ENCODE measurements at regions of chr10 and their contacts with region 1.

Region 1: DNA sequence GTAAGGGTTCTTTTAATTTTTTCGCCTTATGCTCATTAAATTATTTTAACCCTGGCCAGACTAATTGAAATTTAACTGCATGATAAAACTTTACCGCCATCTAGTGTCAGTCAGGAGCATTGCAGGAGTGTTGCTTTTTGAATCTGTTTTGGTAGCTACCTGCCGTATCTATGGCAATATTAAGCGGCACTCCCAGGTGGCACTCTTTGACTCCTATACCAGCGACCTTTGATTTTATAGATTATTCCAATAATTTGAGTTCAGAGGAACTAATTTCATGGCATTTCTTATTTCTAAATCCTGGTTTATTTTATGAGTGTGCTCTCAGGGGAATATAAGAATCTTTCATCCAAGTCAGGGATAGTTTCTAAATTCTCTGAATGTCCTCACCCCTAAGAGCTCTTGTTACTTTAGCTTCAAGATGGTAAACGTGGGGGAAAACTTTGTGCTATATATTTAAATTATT is 198.9 kb downstream of the REEP3 start:
- DNase-seq: peak in 1 of 2 donors; percentile 39
- ATAC-seq: peak in 6 of 8 donors; percentile 22 to 53 (median 35)
- H3K4me3 ChIP-seq: no peak overlapping the region
- H3K27ac ChIP-seq: peak overlapping the region in 5 of 10 donors; percentile 33 to 66 (median 41)
- H3K4me1 ChIP-seq: peaks cover 0 to 39% (median 18%) of the 10 kb centered on the region in 9 donors
- H3K27me3 ChIP-seq: no peaks in the 10 kb centered on the region
- CTCF ChIP-seq: peak; percentile 95 to 99 (median 98)

Region 2: GRCh38 chr10:63166742-63167258 is 553.3 kb before region 1 on chr10:
- intact Hi-C with region 1: loop called in 9 of 10 experiments (anchors 2 to 5 kb)
- DNase-seq: peak in 1 of 2 donors; percentile 61
- ATAC-seq: peak in 7 of 8 donors; percentile 56 to 71 (median 66)
- H3K4me3 ChIP-seq: no peak overlapping the region
- H3K27ac ChIP-seq: no peak overlapping the region
- H3K4me1 ChIP-seq: peaks cover 0 to 39% (median 20%) of the 10 kb centered on the region in 9 donors
- H3K27me3 ChIP-seq: no peaks in the 10 kb centered on the region
- CTCF ChIP-seq: peak; percentile 41 to 91 (median 87)

Region 3: DNA sequence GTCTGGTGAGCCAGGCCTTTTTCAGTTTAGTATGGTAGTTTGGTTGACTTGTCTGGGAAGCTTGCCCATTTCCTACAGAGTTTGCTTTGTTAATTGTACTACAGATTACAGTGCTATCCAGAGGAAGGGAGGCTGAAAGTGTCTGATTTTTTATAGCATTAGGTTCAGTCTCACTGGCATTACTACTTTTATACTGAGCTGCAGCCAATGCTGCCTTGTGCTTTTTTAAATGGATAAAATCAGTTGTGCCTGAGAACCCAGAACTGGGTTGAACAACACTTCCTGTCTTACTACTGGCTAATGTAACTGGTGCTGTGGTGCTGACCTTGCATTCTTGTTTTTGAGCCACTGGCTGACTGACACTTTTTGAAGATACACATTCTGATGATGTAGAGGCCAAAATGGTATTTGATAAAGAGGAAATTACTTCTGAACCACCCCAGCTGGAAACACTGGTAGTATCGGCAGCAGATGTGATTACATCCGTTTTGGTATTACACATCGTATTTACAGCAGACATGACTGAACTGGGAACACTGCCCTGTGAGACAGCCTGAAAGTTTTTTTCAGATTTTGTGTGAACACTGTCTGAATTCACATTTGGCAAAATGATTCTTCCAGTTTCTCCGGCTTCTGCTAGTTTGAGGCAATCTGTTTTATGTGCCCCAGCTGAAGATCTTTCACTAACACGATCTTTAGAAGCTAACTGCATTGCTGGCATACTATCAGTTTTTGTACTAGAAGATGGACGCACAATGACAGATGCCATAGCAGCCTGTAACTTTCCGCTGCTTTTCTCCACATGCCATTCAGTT is 512.9 kb before region 1 on chr10:
- intact Hi-C with region 1: loop called in 4 of 10 experiments (anchors 5 to 10 kb)
- DNase-seq: peak in 1 of 2 donors; percentile 51
- ATAC-seq: peak; percentile 66 to 83 (median 80)
- H3K4me3 ChIP-seq: peak overlapping the region in 4 of 10 donors; percentile 9 to 26 (median 18)
- H3K27ac ChIP-seq: peak overlapping the region; percentile 7 to 80 (median 74)
- H3K4me1 ChIP-seq: peaks cover 0 to 78% (median 72%) of the 10 kb centered on the region in 9 donors
- H3K27me3 ChIP-seq: no peaks in the 10 kb centered on the region
- CTCF ChIP-seq: no peak

Region 4: GRCh38 chr10:63465293-63466143 is 254.6 kb before region 1 on chr10 and contains the start of gene JMJD1C:
- intact Hi-C with region 1: loop called in 2 of 10 experiments (anchors 5 to 10 kb)
- DNase-seq: peak; percentile 76 to 84
- ATAC-seq: peak; percentile 91 to 97 (median 94)
- H3K4me3 ChIP-seq: peak within 1 kb of the TSS; percentile 77 to 86 (median 84)
- H3K27ac ChIP-seq: peak within 1 kb of the TSS; percentile 73 to 97 (median 93)
- H3K4me1 ChIP-seq: peaks cover 0 to 40% (median 28%) of the 10 kb centered on the region in 9 donors
- H3K27me3 ChIP-seq: no peaks in the 10 kb centered on the region
- CTCF ChIP-seq: peak in 1 of 9 donors; percentile 9
- total RNA-seq, gene JMJD1C: 30.9 to 51.9 (median 39.2) TPM

Region 5: DNA sequence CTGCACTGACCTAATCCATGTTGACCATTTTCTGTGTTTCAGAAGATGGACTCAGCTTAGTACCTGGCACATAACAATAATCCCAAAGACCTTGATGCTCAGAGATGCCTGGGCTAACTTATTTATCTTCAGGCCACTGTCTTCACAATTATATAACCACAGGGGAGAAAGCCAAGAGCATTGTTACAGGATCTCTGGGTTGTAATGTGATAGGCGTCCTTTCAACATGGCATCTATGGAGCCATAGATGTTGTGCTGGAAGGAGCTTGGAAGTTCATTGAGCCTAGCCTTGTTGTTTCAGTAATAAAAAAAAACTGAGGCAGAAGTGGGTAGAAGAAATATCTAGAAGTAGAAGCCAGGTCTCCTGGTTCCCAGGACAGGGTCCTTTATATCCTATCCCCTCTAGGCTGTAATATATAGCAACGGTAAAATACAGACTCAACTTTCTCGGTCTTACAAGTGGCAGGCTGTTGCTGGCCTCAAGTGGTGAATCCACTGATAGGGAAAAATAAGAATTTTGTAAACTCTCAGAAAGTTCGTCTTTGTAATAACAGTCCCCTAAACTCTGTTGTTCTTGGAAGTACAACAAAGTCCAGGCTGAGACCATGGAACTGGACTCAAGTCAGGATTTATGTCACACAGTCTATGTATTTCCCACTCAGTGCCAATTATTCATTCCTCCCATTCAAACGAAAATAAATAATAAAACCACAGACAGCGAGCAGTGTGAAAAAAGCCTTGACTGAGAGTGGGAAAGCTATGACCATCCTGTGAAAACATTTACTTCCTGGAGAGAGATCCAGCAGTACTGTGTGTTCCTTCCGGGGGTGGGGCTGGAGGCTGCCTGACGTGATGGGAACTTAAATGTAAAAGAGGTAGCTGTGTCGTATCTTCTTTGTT is 78.7 kb after region 1 on chr10:
- intact Hi-C with region 1: loop called in 1 of 10 experiments (anchors 5 kb)
- DNase-seq: peak; percentile 54 to 83
- ATAC-seq: peak; percentile 88 to 96 (median 92)
- H3K4me3 ChIP-seq: peak overlapping the region in 2 of 10 donors; percentile 3 to 17
- H3K27ac ChIP-seq: peak overlapping the region in 9 of 10 donors; percentile 51 to 81 (median 71)
- H3K4me1 ChIP-seq: peaks cover 0 to 32% (median 22%) of the 10 kb centered on the region in 9 donors
- H3K27me3 ChIP-seq: no peaks in the 10 kb centered on the region
- CTCF ChIP-seq: peak in 5 of 9 donors; percentile 19 to 40 (median 25)

Region 6: GRCh38 chr10:64011912-64012714 is 292.0 kb after region 1 on chr10:
- intact Hi-C with region 1: no loop called
- DNase-seq: no peak
- ATAC-seq: peak in 4 of 8 donors; percentile 16 to 58 (median 44)
- H3K4me3 ChIP-seq: no peak overlapping the region
- H3K27ac ChIP-seq: no peak overlapping the region
- H3K4me1 ChIP-seq: no peaks in the 10 kb centered on the region
- H3K27me3 ChIP-seq: no peaks in the 10 kb centered on the region
- CTCF ChIP-seq: no peak